PC-9 (cell line): ENCODE measurements at regions of chr17 and their contacts with region 1.

Region 1: GRCh38 chr17:37160944-37161343 is 212.2 kb downstream of the AATF start:
- DNase-seq: no peak
- H3K4me3 ChIP-seq: no peak overlapping the region
- H3K27ac ChIP-seq: no peak overlapping the region
- H3K4me1 ChIP-seq: no peaks in the 10 kb centered on the region
- H3K27me3 ChIP-seq: no peaks in the 10 kb centered on the region
- CTCF ChIP-seq: no peak

Region 2: GRCh38 chr17:37137070-37137610 is 23.8 kb before region 1 on chr17:
- CTCF ChIA-PET with region 1: no interaction called
- POLR2A ChIA-PET with region 1: no interaction called
- intact Hi-C with region 1: loop called (anchors 2 kb)
- DNase-seq: no peak
- H3K4me3 ChIP-seq: no peak overlapping the region
- H3K27ac ChIP-seq: no peak overlapping the region
- H3K4me1 ChIP-seq: no peaks in the 10 kb centered on the region
- H3K27me3 ChIP-seq: no peaks in the 10 kb centered on the region
- CTCF ChIP-seq: no peak

Region 3: GRCh38 chr17:37339321-37339720 is 178.4 kb after region 1 on chr17:
- CTCF ChIA-PET with region 1: no interaction called
- POLR2A ChIA-PET with region 1: no interaction called
- intact Hi-C with region 1: no loop called
- DNase-seq: no peak
- H3K4me3 ChIP-seq: no peak overlapping the region
- H3K27ac ChIP-seq: no peak overlapping the region
- H3K4me1 ChIP-seq: no peaks in the 10 kb centered on the region
- H3K27me3 ChIP-seq: no peaks in the 10 kb centered on the region
- CTCF ChIP-seq: no peak

Region 4: GRCh38 chr17:37447641-37448040 is 286.7 kb after region 1 on chr17:
- CTCF ChIA-PET with region 1: no interaction called
- POLR2A ChIA-PET with region 1: no interaction called
- intact Hi-C with region 1: no loop called
- DNase-seq: peak; percentile 16 to 76
- H3K4me3 ChIP-seq: no peak overlapping the region
- H3K27ac ChIP-seq: peak overlapping the region; percentile 81
- H3K4me1 ChIP-seq: peaks cover 54% of the 10 kb centered on the region
- H3K27me3 ChIP-seq: no peaks in the 10 kb centered on the region
- CTCF ChIP-seq: no peak